Activated CD4-positive, alpha-beta T cell treated with anti-CD3 and anti-CD28 coated beads for 36 hours (primary cell): ENCODE measurements at regions of chr7 and their contacts with region 1.

Region 1: DNA sequence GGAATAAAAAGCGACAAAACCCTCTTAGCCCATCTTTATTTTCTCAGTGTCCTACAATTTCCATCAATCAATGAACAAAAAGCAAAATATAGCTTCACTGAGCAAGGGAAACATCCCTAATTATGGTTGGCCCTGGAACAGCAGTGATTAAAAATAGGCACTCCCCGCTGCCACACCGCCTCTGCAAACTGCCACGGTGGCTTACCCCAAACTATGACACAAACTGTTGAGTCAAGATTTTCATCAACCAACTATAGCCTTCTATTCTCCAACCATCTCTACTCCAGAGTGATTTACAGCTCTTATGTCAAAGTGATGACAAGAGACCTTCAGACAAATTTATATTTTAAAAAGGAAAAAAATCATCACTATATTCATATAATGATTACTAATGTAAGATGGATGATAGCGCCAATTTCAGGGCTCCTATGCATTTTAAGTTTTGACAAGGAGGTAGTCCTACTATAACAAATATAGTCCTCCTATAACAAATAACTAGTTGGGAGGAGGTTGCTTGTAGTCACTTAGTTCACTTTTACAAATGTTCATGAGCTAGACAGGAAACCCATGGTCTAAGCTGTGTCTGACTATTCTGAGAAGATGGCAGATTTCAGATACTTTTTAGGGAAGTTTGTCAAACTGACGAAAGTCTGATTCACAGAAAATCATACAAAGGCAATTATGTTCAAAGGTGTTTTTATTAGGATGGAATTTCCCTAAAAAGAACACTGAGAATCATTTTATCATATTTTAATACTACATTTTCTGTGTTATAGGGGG is 26.3 kb downstream of the DENND11 start:
- DNase-seq: peak; percentile 43
- ATAC-seq: peak; percentile 45
- H3K4me3 Mint-ChIP-seq: no peak overlapping the region
- H3K27ac Mint-ChIP-seq: no peak overlapping the region
- H3K4me1 Mint-ChIP-seq: peaks cover 22% of the 10 kb centered on the region
- H3K27me3 Mint-ChIP-seq: no peaks in the 10 kb centered on the region

Region 2: GRCh38 chr7:141731476-141732149 is 56.0 kb after region 1 on chr7:
- CTCF ChIA-PET with region 1: no interaction called
- POLR2A ChIA-PET with region 1: no interaction called
- intact Hi-C with region 1: loop called in 1 of 2 experiments (anchors 5 kb)
- DNase-seq: no peak
- ATAC-seq: no peak
- H3K4me3 Mint-ChIP-seq: no peak overlapping the region
- H3K27ac Mint-ChIP-seq: no peak overlapping the region
- H3K4me1 Mint-ChIP-seq: peaks cover 2% of the 10 kb centered on the region
- H3K27me3 Mint-ChIP-seq: no peaks in the 10 kb centered on the region